ENCODE measurements at regions of chr9 and their contacts with region 1.

Region 1: DNA sequence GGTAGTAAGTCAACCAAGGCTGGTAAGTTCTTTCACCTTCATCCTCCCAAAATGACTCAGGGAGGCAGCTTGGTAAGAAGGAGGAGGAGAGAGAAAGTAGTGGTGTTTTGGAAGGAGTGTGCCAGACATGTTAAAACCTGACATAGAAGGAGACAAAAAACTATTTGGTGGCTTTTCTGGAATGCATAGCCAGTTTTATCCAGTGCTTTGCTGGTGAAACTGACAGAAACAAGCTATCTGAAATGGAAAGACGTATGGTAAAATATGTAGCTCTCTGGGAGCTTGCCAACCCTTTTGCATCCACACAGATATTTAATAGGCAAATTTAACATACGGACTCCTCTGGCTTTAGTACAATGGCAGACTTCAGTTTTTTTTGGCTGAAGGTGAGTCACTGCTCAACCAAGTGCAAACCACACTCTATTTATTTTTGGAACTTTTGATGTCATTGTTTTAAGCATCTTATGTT is 45.4 kb downstream of the RAB14 start:
- DNase-seq: peak; percentile 45
- H3K4me3 ChIP-seq: no peak overlapping the region
- H3K27ac ChIP-seq: no peak overlapping the region
- H3K4me1 ChIP-seq: peaks cover 3% of the 10 kb centered on the region
- H3K27me3 ChIP-seq: no peaks in the 10 kb centered on the region
- CTCF ChIP-seq: no peak
- POLR2A ChIP-seq: no peak

Region 2: GRCh38 chr9:121169094-121169601 is 12.9 kb after region 1 on chr9:
- CTCF ChIA-PET with region 1: interaction called, 17 read pairs
- POLR2A ChIA-PET with region 1: no interaction called
- dilution Hi-C with region 1: no loop called
- intact Hi-C with region 1: no loop called
- DNase-seq: peak; percentile 18
- H3K4me3 ChIP-seq: no peak overlapping the region
- H3K27ac ChIP-seq: no peak overlapping the region
- H3K4me1 ChIP-seq: no peaks in the 10 kb centered on the region
- H3K27me3 ChIP-seq: no peaks in the 10 kb centered on the region
- CTCF ChIP-seq: peak; percentile 45 to 49
- POLR2A ChIP-seq: no peak

Region 3: DNA sequence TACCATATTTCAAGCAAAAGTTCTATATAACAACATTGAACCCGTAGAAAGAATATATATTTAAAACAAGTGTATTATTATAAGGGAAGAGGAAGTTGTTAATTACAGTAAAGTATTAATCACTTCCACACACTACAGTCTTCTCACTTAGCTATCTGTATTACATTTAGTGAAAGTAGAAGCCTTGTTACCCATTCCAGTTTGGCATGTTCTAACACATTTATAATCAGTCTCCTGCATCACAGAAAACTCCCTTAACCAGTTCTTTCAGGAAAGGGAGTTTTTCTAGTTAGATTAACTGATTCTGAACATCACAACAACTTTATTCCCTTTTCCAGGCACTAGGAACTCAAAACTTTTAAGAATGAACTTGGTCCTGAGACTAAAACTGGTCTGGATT is 38.4 kb after region 1 on chr9:
- CTCF ChIA-PET with region 1: no interaction called
- POLR2A ChIA-PET with region 1: no interaction called
- dilution Hi-C with region 1: no loop called
- intact Hi-C with region 1: no loop called
- DNase-seq: no peak
- H3K4me3 ChIP-seq: no peak overlapping the region
- H3K27ac ChIP-seq: no peak overlapping the region
- H3K4me1 ChIP-seq: peaks cover 42% of the 10 kb centered on the region
- H3K27me3 ChIP-seq: no peaks in the 10 kb centered on the region
- CTCF ChIP-seq: no peak
- POLR2A ChIP-seq: no peak

Region 4: DNA sequence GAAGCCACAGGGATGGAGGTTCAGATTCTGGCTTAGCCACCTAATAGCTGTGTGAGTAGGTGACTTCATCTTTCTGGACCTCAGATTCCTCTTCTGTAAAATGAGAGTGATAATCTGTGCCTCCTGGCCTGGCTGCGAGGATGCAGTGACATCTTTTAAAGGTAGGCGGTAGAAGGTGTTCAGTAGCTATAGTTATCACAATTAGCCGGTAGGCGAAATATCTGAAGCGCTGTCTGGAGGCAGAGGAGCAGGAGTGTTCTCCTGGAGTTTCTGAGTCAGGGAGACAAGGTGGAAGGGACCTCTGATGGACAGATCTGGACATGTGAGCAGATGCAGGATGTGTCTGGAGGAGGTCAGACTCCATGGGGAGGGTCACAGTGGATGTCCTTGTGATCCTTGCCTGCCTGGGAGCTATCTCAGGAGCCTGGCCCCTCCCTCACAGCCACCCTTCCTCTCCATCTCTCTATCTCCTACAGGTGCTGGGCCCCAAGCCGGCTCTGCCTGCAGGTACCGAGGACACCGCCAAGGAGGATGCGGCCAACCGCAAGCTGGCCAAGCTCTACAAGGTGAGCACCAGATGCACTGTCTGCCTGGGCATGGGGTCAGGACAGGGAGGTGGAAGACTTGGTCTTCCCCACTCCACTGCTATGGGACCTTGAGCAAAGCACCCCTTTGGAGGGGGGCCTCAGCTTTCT is 157.3 kb after region 1 on chr9:
- CTCF ChIA-PET with region 1: no interaction called
- POLR2A ChIA-PET with region 1: no interaction called
- dilution Hi-C with region 1: no loop called
- intact Hi-C with region 1: no loop called
- DNase-seq: no peak
- H3K4me3 ChIP-seq: no peak overlapping the region
- H3K27ac ChIP-seq: no peak overlapping the region
- H3K4me1 ChIP-seq: no peaks in the 10 kb centered on the region
- H3K27me3 ChIP-seq: no peaks in the 10 kb centered on the region
- CTCF ChIP-seq: no peak
- POLR2A ChIP-seq: no peak

Measured in endothelial cell of umbilical vein (primary cell).